ENCODE measurements at regions of chr5 and their contacts with region 1.

Region 1: GRCh38 chr5:95835682-95836385 is 13.3 kb upstream of the GLRX start:
- DNase-seq: no peak
- ATAC-seq: no peak
- H3K4me3 Mint-ChIP-seq: peak overlapping the region; percentile 92
- H3K27ac Mint-ChIP-seq: peak overlapping the region; percentile 84
- H3K4me1 Mint-ChIP-seq: peaks cover 55% of the 10 kb centered on the region
- H3K27me3 Mint-ChIP-seq: no peaks in the 10 kb centered on the region
- CTCF ChIP-seq: no peak

Region 2: DNA sequence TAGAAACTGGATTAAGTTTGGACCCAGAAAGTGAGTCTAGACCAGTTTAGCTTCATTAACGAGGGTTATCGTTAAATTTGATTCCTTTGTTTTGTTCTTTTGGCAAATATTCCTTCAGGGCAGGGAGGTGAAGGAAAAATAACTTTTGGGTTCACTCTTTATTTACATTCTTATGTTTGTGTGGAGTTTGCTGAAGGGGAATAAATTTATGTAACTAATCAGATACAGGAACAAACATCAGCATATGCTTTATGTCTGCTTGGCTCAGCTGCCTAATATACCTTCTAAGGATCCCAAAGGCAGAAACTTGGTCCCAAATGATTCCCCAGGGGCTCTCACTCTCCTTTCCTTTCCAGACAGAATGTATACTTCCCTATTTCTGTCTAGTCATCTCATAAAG is 683.3 kb before region 1 on chr5:
- CTCF ChIA-PET with region 1: no interaction called
- POLR2A ChIA-PET with region 1: no interaction called
- intact Hi-C with region 1: no loop called
- DNase-seq: no peak
- ATAC-seq: no peak
- H3K4me3 Mint-ChIP-seq: no peak overlapping the region
- H3K27ac Mint-ChIP-seq: no peak overlapping the region
- H3K4me1 Mint-ChIP-seq: no peaks in the 10 kb centered on the region
- H3K27me3 Mint-ChIP-seq: peaks cover 2% of the 10 kb centered on the region
- CTCF ChIP-seq: no peak

Region 3: GRCh38 chr5:95817440-95817839 is 18.4 kb before region 1 on chr5:
- CTCF ChIA-PET with region 1: interaction called, 16 read pairs
- POLR2A ChIA-PET with region 1: interaction called, 233 read pairs
- intact Hi-C with region 1: loop called (anchors 1 kb)
- DNase-seq: no peak
- ATAC-seq: no peak
- H3K4me3 Mint-ChIP-seq: peak overlapping the region; percentile 78
- H3K27ac Mint-ChIP-seq: peak overlapping the region; percentile 98
- H3K4me1 Mint-ChIP-seq: peaks cover 80% of the 10 kb centered on the region
- H3K27me3 Mint-ChIP-seq: no peaks in the 10 kb centered on the region
- CTCF ChIP-seq: no peak

Region 4: GRCh38 chr5:95822542-95823181 is 13.2 kb before region 1 on chr5 and contains the start of gene GLRX:
- CTCF ChIA-PET with region 1: interaction called, 16 read pairs
- POLR2A ChIA-PET with region 1: interaction called, 233 read pairs
- intact Hi-C with region 1: loop called (anchors 1 kb)
- DNase-seq: no peak
- ATAC-seq: peak; percentile 30
- H3K4me3 Mint-ChIP-seq: peak within 1 kb of the TSS; percentile 95
- H3K27ac Mint-ChIP-seq: peak within 1 kb of the TSS; percentile 98
- H3K4me1 Mint-ChIP-seq: peaks cover 72% of the 10 kb centered on the region
- H3K27me3 Mint-ChIP-seq: no peaks in the 10 kb centered on the region
- CTCF ChIP-seq: no peak
- total RNA-seq, gene GLRX: 55.4 and 60.2 TPM in 2 replicates

Region 5: DNA sequence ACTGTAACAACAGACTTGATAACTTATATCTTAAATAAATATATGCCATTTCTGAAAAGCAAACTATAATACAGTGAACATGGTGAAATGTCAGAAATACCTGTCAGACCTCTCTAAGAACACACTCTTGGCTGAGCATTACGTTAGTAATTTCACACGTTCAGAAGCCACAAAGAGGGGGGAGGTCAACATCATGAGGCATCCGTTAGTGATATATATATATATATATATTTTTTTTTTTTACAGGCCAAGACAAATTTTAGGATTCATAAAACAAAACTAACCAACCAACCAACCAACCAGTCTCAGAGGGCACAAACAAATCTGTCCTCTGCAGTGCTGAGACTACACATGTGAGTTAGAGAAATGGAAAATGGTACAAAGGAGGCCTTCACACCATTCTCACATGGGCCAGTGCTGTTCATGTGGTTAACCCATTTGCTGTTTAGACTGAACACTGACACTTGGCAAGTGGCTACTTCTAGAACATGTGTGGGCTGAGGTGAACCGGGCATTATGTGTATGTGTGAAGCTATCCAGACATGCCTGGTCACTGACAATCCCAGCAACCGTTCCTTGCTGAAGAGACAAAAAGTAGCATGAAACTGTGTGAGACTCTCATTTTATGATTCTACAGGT is 71.4 kb after region 1 on chr5:
- CTCF ChIA-PET with region 1: no interaction called
- POLR2A ChIA-PET with region 1: no interaction called
- intact Hi-C with region 1: no loop called
- DNase-seq: no peak
- ATAC-seq: no peak
- H3K4me3 Mint-ChIP-seq: no peak overlapping the region
- H3K27ac Mint-ChIP-seq: no peak overlapping the region
- H3K4me1 Mint-ChIP-seq: no peaks in the 10 kb centered on the region
- H3K27me3 Mint-ChIP-seq: no peaks in the 10 kb centered on the region
- CTCF ChIP-seq: no peak

Measured in activated B cell treated with CpG ODN at 0.5 μM for 24 hours (primary cell).